GM12878 (cell line): ENCODE measurements at regions of chr3 and their contacts with region 1.

Region 1: GRCh38 chr3:163951397-163951987 is 1126.8 kb downstream of the SI start:
- DNase-seq: no peak
- ATAC-seq: peak; percentile 47; the same call in 2 of the 3 replicates
- H3K4me3 ChIP-seq: no peak overlapping the region
- H3K27ac ChIP-seq: no peak overlapping the region
- H3K4me1 ChIP-seq: no peaks in the 10 kb centered on the region
- H3K27me3 ChIP-seq: no peaks in the 10 kb centered on the region
- CTCF ChIP-seq: peak in 2 of 3 experiments; percentile 24 to 38; a peak in 2 of 6 replicates
- EP300 ChIP-seq: no peak
- POLR2A ChIP-seq: no peak
- RAD21 ChIP-seq: peak; percentile 36; the same call in 1 of the 2 replicates

Region 2: GRCh38 chr3:163056874-163057497 is 894.5 kb before region 1 on chr3:
- CTCF ChIA-PET with region 1: interaction called, 5 read pairs
- POLR2A ChIA-PET with region 1: no interaction called
- RAD21 ChIA-PET with region 1: no interaction called
- SMC1A ChIA-PET with region 1: interaction called, 4 read pairs
- in situ Hi-C with region 1: no loop called
- intact Hi-C with region 1: loop called (anchors 10 kb)
- DNase-seq: no peak
- ATAC-seq: peak; percentile 76
- H3K4me3 ChIP-seq: no peak overlapping the region
- H3K27ac ChIP-seq: no peak overlapping the region
- H3K4me1 ChIP-seq: no peaks in the 10 kb centered on the region
- H3K27me3 ChIP-seq: no peaks in the 10 kb centered on the region
- CTCF ChIP-seq: peak; percentile 56 to 62 (median 61); a peak in 5 of 6 replicates
- EP300 ChIP-seq: no peak
- POLR2A ChIP-seq: no peak
- RAD21 ChIP-seq: peak; percentile 73

Region 3: DNA sequence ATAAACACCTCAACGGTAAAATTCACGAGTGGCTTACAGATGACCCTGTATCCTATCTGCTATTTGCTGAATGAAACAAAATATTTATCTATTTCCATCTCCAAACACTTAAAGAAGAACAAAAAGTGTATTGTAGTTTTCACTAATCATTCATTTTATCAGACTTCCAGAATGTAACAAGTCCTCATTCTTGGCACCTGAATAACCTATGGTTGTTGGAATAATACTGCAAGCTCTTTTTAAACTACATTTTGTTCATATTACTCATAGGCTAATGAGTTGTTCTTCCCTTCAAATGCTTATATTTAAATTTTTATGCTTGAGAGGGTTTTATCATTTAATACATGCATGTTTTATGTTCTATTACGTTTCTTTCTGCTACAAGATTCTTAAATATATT is 307.3 kb before region 1 on chr3:
- CTCF ChIA-PET with region 1: no interaction called
- POLR2A ChIA-PET with region 1: no interaction called
- RAD21 ChIA-PET with region 1: no interaction called
- SMC1A ChIA-PET with region 1: no interaction called
- in situ Hi-C with region 1: no loop called
- intact Hi-C with region 1: no loop called
- DNase-seq: no peak
- ATAC-seq: no peak
- H3K4me3 ChIP-seq: no peak overlapping the region
- H3K27ac ChIP-seq: no peak overlapping the region
- H3K4me1 ChIP-seq: no peaks in the 10 kb centered on the region
- H3K27me3 ChIP-seq: no peaks in the 10 kb centered on the region
- CTCF ChIP-seq: no peak
- EP300 ChIP-seq: no peak
- POLR2A ChIP-seq: no peak
- RAD21 ChIP-seq: no peak

Region 4: DNA sequence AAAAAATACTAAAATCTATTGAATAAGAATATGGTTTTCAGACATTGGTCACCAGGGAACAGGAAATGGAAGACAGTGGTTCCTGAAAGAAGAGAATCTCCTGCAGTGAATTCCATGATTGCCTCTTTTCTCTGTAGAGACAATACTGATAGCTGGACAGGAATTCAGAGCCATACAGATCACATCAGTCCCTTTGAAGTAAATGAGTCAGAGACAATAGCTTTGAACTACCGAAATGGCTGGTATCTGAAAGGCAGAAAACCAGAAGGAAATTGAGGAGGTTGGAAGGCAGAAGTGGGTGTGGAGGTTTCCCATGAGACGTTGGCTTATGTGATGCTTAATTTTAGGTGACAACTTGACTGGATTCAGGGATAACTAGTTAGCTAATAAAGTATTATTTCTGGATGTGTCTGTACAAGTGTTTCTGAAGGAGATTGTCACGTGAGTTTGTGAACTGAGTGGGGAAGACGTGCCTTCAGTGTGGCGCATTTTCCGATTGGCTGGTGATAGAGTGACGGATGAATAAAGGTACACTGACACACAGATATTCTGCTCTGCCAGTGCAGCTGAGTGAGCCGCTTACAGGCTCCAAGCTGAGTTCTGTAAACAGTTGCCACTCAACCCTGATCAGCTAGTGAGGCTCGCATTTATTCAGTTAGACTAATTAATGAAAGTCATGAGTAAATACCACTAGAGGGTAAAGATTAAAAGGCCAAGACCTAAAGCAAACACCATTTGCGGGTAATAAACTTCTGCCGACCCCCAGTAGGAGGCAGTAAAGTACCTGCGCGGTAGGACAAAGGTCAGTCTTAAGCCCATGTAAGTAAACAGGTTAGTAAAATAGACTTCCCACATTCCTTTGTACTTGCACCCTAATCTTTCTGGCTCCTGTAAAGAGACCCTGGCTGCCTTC is 171.8 kb before region 1 on chr3:
- CTCF ChIA-PET with region 1: interaction called, 96 read pairs
- POLR2A ChIA-PET with region 1: no interaction called
- RAD21 ChIA-PET with region 1: interaction called, 28 read pairs
- SMC1A ChIA-PET with region 1: interaction called, 30 read pairs
- in situ Hi-C with region 1: no loop called
- intact Hi-C with region 1: loop called (anchors 2 kb)
- DNase-seq: no peak
- ATAC-seq: peak; percentile 52
- H3K4me3 ChIP-seq: no peak overlapping the region
- H3K27ac ChIP-seq: no peak overlapping the region
- H3K4me1 ChIP-seq: no peaks in the 10 kb centered on the region
- H3K27me3 ChIP-seq: no peaks in the 10 kb centered on the region
- CTCF ChIP-seq: peak; percentile 3 to 15 (median 12); a peak in 2 of 6 replicates
- EP300 ChIP-seq: no peak
- POLR2A ChIP-seq: no peak
- RAD21 ChIP-seq: 0 out of 2 replicates have a peak, but pooled peaks have one; percentile 14

Region 5: GRCh38 chr3:163785693-163786092 is 165.8 kb before region 1 on chr3:
- CTCF ChIA-PET with region 1: interaction called, 96 read pairs
- POLR2A ChIA-PET with region 1: no interaction called
- RAD21 ChIA-PET with region 1: interaction called, 28 read pairs
- SMC1A ChIA-PET with region 1: interaction called, 30 read pairs
- in situ Hi-C with region 1: no loop called
- intact Hi-C with region 1: loop called (anchors 2 kb)
- DNase-seq: no peak
- ATAC-seq: peak; percentile 82
- H3K4me3 ChIP-seq: no peak overlapping the region
- H3K27ac ChIP-seq: no peak overlapping the region
- H3K4me1 ChIP-seq: no peaks in the 10 kb centered on the region
- H3K27me3 ChIP-seq: no peaks in the 10 kb centered on the region
- CTCF ChIP-seq: peak; percentile 20 to 53 (median 36); a peak in 5 of 6 replicates
- EP300 ChIP-seq: no peak
- POLR2A ChIP-seq: no peak
- RAD21 ChIP-seq: peak; percentile 62